Sigmoid colon (tissue), 7 donors: ENCODE measurements at regions of chr2 and their contacts with region 1.

Region 1: GRCh38 chr2:108637304-108637669 is 82.0 kb upstream of the RANBP2 start:
- DNase-seq: no peak
- H3K4me3 ChIP-seq: no peak overlapping the region
- H3K27ac ChIP-seq: peak overlapping the region in 3 of 4 donors; percentile 56 to 75 (median 69)
- H3K4me1 ChIP-seq: peaks cover 0 to 89% (median 71%) of the 10 kb centered on the region in 4 donors
- H3K27me3 ChIP-seq: no peaks in the 10 kb centered on the region
- CTCF ChIP-seq: no peak
- EP300 ChIP-seq: no peak
- POLR2A ChIP-seq: no peak

Region 2: GRCh38 chr2:108615480-108616090 is 21.7 kb before region 1 on chr2:
- intact Hi-C with region 1: loop called (anchors 2 kb)
- DNase-seq: no peak
- H3K4me3 ChIP-seq: no peak overlapping the region
- H3K27ac ChIP-seq: no peak overlapping the region
- H3K4me1 ChIP-seq: peaks cover 0 to 83% (median 72%) of the 10 kb centered on the region in 4 donors
- H3K27me3 ChIP-seq: no peaks in the 10 kb centered on the region
- CTCF ChIP-seq: no peak
- EP300 ChIP-seq: no peak
- POLR2A ChIP-seq: no peak

Region 3: DNA sequence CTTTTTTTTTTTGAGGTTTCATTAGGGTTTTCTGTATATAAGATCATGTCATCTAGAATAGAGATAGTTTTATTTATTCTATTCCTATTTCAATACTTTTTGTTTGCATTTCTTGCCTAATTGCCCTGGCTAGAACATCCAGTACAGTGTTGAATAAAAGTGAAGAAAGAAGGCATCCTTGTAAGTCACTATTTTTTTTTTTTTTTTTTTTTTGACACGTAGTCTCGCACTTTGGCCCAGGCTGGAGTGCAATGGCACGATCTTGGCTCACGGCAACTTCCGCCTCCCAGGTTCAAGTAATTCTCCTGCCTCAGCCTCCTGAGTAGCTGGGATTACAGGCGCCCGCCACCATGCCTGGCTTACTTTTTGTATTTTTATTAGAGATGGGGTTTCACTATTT is 54.2 kb after region 1 on chr2:
- intact Hi-C with region 1: no loop called
- DNase-seq: no peak
- H3K4me3 ChIP-seq: no peak overlapping the region
- H3K27ac ChIP-seq: no peak overlapping the region
- H3K4me1 ChIP-seq: no peaks in the 10 kb centered on the region
- H3K27me3 ChIP-seq: no peaks in the 10 kb centered on the region
- CTCF ChIP-seq: no peak
- EP300 ChIP-seq: no peak
- POLR2A ChIP-seq: no peak